Heart left ventricle (tissue), 16 donors: ENCODE measurements at regions of chr1 and their contacts with region 1.

Region 1: DNA sequence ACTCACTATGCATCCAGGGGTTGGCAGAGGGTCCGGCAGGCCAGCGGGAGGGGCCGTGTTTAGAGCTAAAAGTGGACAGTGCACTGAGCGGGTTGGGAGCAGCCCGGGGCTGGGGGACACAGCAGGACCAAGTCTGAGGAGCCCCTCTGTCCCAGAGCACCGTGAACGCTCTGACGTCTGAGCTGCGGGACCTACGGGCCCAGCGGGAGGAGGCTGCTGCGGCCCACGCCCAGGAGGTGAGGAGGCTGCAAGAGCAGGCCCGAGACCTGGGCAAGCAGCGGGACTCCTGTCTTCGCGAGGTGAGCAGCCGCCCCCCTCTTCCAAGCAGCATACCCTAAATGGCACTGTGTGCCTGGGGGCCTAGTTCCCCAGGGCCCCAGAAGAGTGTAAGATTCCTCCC is 25.8 kb downstream of the MFAP2 start:
- DNase-seq: no peak
- ATAC-seq: no peak
- H3K4me3 ChIP-seq: no peak overlapping the region
- H3K27ac ChIP-seq: no peak overlapping the region
- H3K4me1 ChIP-seq: peaks cover 0 to 6% (median 0%) of the 10 kb centered on the region in 12 donors
- H3K27me3 ChIP-seq: no peaks in the 10 kb centered on the region
- CTCF ChIP-seq: no peak
- POLR2A ChIP-seq: no peak

Region 2: DNA sequence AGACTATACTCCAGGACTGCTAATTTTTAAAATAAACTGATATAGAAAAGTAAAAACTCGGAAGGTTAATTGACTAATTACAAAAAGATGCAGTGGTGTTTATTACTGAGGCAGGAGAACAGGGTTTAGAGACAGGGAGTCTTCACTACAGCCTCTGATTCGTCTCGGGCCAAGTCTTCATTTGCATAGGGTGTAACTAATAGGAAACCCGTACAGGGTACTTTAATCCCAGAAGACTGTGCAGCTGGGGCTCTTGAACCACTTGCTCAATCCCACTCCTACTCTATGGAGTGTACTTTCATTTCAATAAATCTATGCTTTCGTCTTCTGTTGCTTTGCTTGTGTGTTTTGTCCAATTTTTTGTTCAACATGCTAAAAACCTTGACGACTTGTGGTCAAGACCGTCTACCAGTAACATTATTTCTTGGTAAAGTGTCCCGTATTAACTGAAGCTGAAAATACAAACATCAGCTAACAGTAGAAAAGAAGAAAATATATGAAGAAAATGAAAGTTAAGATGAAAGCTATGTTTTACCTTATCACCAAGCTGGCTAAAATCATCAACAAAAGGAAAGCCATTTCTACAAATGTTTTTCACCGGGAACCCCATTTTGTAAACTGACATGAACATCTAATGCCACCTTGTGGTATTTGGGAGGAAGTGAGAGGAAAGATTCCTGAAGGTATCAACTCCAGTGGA is 91.2 kb after region 1 on chr1:
- intact Hi-C with region 1: loop called in 8 of 10 experiments (anchors 1 to 5 kb)
- DNase-seq: no peak
- ATAC-seq: peak; percentile 40 to 76 (median 62)
- H3K4me3 ChIP-seq: peak overlapping the region in 8 of 12 donors; percentile 9 to 40 (median 22)
- H3K27ac ChIP-seq: peak overlapping the region in 4 of 12 donors; percentile 12 to 45 (median 26)
- H3K4me1 ChIP-seq: peaks cover 0 to 30% (median 10%) of the 10 kb centered on the region in 12 donors
- H3K27me3 ChIP-seq: no peaks in the 10 kb centered on the region
- CTCF ChIP-seq: peak; percentile 61 to 83 (median 76)
- POLR2A ChIP-seq: no peak

Region 3: GRCh38 chr1:17236779-17237560 is 282.4 kb after region 1 on chr1:
- intact Hi-C with region 1: loop called in 4 of 10 experiments (anchors 2 to 10 kb)
- DNase-seq: peak; percentile 79 to 89 (median 81)
- ATAC-seq: peak; percentile 64 to 86 (median 84)
- H3K4me3 ChIP-seq: no peak overlapping the region
- H3K27ac ChIP-seq: no peak overlapping the region
- H3K4me1 ChIP-seq: peaks cover 0 to 9% (median 0%) of the 10 kb centered on the region in 12 donors
- H3K27me3 ChIP-seq: peaks cover 0 to 44% (median 6%) of the 10 kb centered on the region in 9 donors
- CTCF ChIP-seq: peak; percentile 75 to 91 (median 84)
- POLR2A ChIP-seq: no peak